Calu3 (cell line): ENCODE measurements at regions of chr5 and their contacts with region 1.

Region 1: GRCh38 chr5:142748568-142749249 is 21.5 kb upstream of the ARHGAP26 start:
- DNase-seq: peak; percentile 71
- H3K4me3 Mint-ChIP-seq: no peak overlapping the region
- H3K27ac Mint-ChIP-seq: peak overlapping the region; percentile 87
- H3K4me1 Mint-ChIP-seq: peaks cover 44% of the 10 kb centered on the region
- H3K27me3 Mint-ChIP-seq: no peaks in the 10 kb centered on the region
- CTCF ChIP-seq: peak; percentile 78

Region 2: DNA sequence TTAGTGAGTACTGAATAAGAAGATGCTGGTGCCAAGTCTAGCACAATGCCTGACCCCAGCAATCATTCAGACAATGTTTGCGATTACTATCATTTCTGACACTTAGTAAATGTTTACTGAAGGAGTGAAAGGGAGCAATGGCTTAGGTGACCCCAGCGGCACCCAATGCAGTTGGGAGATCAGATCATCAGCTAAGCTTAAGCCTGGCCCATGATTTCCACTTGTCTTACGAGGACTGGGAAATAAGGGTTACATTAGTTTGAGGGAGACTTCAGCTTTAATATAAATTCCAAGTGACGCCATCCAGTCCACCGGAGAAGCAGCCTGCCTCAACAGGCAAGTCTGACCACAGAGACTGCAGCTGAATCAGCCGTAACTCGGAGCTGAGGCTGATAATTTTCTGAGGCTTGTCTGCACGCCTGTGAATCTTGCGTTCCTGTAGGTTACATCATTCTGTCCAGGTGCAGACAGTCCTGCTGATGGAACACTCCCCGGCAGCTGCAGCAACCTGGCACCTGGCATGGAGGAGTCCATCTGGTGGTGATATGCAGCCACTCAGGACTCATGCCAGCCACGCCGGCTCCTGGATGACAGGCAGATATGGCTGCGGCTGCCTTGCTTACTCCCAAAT is 28.0 kb before region 1 on chr5:
- CTCF ChIA-PET with region 1: interaction called, 17 read pairs
- intact Hi-C with region 1: loop called (anchors 2 kb)
- DNase-seq: peak; percentile 34
- H3K4me3 Mint-ChIP-seq: no peak overlapping the region
- H3K27ac Mint-ChIP-seq: no peak overlapping the region
- H3K4me1 Mint-ChIP-seq: peaks cover 39% of the 10 kb centered on the region
- H3K27me3 Mint-ChIP-seq: no peaks in the 10 kb centered on the region
- CTCF ChIP-seq: no peak

Region 3: GRCh38 chr5:142881076-142881783 is 132.5 kb after region 1 on chr5:
- CTCF ChIA-PET with region 1: interaction called, 28 read pairs
- intact Hi-C with region 1: loop called (anchors 1 kb)
- DNase-seq: no peak
- H3K4me3 Mint-ChIP-seq: no peak overlapping the region
- H3K27ac Mint-ChIP-seq: no peak overlapping the region
- H3K4me1 Mint-ChIP-seq: peaks cover 42% of the 10 kb centered on the region
- H3K27me3 Mint-ChIP-seq: no peaks in the 10 kb centered on the region
- CTCF ChIP-seq: no peak

Region 4: DNA sequence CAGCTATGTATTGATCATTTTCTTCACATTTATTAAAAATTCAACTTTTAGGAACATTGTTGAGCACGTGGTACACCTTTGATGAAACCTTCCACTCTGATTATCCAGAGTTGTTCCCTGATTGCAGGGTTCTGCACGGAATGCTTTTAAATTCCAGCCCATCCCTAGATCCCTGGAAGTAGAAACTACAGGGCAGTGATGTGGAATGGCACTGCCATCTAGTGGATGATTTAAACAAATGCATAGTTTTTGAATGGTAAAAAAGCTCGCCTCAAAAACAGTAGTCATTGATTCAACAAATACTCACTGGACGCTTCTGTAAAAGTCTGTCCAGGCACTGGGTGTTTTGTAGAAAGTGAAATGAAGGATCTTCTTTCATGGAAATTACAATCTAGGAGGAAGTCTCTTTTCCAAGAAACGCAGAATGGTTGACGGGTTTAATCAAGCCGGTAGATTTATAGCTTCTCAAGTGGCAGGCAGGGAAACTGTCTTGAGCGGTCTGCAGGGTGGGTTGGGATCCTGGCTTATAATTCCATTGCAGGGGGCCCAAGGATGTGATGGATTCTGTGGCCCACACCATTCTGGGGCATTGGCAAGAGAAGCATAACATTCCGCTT is 139.9 kb after region 1 on chr5:
- CTCF ChIA-PET with region 1: interaction called, 31 read pairs
- intact Hi-C with region 1: no loop called
- DNase-seq: peak; percentile 46
- H3K4me3 Mint-ChIP-seq: no peak overlapping the region
- H3K27ac Mint-ChIP-seq: no peak overlapping the region
- H3K4me1 Mint-ChIP-seq: peaks cover 33% of the 10 kb centered on the region
- H3K27me3 Mint-ChIP-seq: no peaks in the 10 kb centered on the region
- CTCF ChIP-seq: peak; percentile 52